ENCODE measurements at regions of chr17 and their contacts with region 1.

Region 1: GRCh38 chr17:35540589-35541404 is 3.3 kb upstream of the SLFN12L start:
- DNase-seq: peak; percentile 66
- ATAC-seq: peak; percentile 29
- H3K4me3 Mint-ChIP-seq: peak overlapping the region; percentile 82
- H3K27ac Mint-ChIP-seq: peak overlapping the region; percentile 95
- H3K4me1 Mint-ChIP-seq: peaks cover 60% of the 10 kb centered on the region
- H3K27me3 Mint-ChIP-seq: no peaks in the 10 kb centered on the region

Region 2: GRCh38 chr17:35214631-35215273 is 326.0 kb before region 1 on chr17:
- CTCF ChIA-PET with region 1: interaction called, 19 read pairs
- POLR2A ChIA-PET with region 1: interaction called, 67 read pairs
- DNase-seq: peak; percentile 51
- ATAC-seq: peak; percentile 43
- H3K4me3 Mint-ChIP-seq: peak overlapping the region; percentile 69
- H3K27ac Mint-ChIP-seq: peak overlapping the region; percentile 96
- H3K4me1 Mint-ChIP-seq: peaks cover 86% of the 10 kb centered on the region
- H3K27me3 Mint-ChIP-seq: no peaks in the 10 kb centered on the region

Region 3: DNA sequence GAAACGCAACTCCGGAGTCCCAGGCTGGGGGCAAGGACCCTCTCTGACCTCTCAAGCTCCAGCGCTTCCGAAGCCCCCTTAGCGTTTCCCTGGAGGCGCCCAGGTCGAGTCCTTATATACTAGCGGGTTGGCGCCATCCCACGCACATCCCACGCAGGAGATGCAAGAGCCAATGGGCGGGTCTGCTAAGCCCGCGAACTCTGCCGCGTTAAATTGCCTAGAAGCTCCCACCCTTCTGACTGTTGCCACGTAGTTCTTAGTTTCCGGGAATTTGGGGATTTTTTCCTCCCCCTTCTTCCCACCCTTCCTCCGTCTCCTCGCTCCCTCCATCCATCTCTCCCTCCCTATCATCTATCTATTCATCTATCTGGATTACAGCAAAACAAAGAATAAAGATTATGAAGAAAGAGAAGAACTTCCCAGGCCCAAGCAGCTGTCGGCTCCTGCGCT is 167.2 kb before region 1 on chr17 and contains the start of gene SLFN11:
- CTCF ChIA-PET with region 1: interaction called, 23 read pairs
- POLR2A ChIA-PET with region 1: interaction called, 54 read pairs
- DNase-seq: peak; percentile 86
- ATAC-seq: peak; percentile 81
- H3K4me3 Mint-ChIP-seq: peak within 1 kb of the TSS; percentile 99
- H3K27ac Mint-ChIP-seq: peak within 1 kb of the TSS; percentile 98
- H3K4me1 Mint-ChIP-seq: peaks cover 57% of the 10 kb centered on the region
- H3K27me3 Mint-ChIP-seq: peaks cover 3% of the 10 kb centered on the region
- total RNA-seq, gene SLFN11: 40.0 to 50.1 TPM

Region 4: DNA sequence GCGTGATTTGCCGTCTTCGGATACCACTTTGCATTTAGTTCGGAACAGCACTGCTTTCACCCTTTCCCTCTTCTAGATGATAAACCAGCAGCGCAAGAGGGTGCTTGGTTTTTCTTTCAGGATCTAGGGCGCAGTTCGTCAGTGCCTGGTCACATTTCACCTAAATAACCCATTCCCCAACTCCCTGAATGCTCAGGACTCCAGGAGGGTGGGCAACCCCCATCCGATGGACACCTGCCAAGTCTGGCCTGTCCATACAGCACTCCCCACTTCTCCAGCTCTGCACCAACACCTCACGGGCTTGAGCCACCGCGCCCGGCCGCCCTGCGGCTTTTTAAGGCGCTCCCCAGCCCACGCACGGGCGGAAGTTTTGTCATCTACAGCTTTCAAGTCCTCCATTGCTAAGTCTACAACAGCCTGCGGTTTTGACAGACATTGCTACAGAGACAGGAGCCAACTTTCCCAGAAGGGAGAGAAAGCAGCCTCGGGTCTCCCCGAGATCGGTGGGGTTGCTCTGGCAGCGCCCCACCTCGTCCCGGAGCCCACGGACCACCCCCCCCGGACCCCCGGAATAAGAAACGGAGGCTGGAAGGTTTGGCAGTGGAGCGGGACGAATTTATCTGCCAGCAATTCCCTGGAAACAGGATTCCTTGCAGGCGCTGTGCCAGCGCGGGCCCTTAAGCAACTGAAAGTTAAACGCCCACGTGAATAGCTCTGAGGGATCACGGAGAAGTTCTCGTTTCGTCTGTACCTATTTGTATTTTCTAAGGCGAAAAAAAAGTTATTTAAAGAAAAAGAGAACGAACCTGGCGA is 53.7 kb before region 1 on chr17:
- CTCF ChIA-PET with region 1: interaction called, 12 read pairs
- POLR2A ChIA-PET with region 1: interaction called, 10 read pairs
- DNase-seq: peak; percentile 76
- ATAC-seq: peak; percentile 69
- H3K4me3 Mint-ChIP-seq: peak overlapping the region; percentile 76
- H3K27ac Mint-ChIP-seq: peak overlapping the region; percentile 90
- H3K4me1 Mint-ChIP-seq: peaks cover 71% of the 10 kb centered on the region
- H3K27me3 Mint-ChIP-seq: no peaks in the 10 kb centered on the region

Region 5: DNA sequence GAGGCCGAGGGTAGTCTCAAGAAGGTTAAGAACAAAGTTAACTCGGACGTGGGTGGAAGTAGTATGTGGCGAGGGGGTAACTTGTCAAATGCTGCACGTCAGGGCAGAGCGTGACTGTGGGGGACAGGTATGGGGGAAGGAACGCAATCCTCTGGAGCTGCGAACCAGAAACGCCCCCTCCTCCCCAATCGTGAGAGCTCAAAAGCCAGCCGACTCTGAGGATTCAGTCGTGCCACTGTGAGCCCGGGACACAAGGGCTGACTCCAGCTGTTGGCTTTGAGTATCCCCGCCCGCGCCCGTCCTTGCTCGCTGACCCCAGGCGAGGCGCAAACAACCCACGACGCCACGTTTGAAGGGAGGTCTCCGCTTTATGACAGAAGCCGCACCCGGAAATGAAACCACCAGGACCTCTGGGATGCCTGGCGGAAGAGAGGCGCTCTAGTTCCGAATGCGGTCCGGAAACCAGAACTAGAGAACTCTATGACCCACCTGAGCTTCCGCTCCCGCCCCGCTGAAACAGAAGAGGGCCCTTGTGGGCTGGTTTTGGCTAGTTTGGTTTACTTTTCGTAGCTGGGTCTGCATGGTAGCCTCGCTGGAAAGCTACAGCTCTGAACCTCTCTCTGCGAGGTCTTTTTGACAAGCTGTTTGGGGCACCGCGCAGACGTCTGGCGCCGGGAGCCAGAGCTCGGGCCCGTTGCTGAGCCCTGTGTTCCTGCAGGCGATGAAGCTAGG is 37.6 kb after region 1 on chr17 and contains the start of gene PEX12:
- CTCF ChIA-PET with region 1: interaction called, 13 read pairs
- POLR2A ChIA-PET with region 1: interaction called, 45 read pairs
- DNase-seq: peak; percentile 94
- ATAC-seq: peak; percentile 96
- H3K4me3 Mint-ChIP-seq: peak within 1 kb of the TSS; percentile 93
- H3K27ac Mint-ChIP-seq: peak within 1 kb of the TSS; percentile 96
- H3K4me1 Mint-ChIP-seq: peaks cover 28% of the 10 kb centered on the region
- H3K27me3 Mint-ChIP-seq: peaks cover under 1% of the 10 kb centered on the region
- total RNA-seq, gene PEX12: 4.0 to 4.1 TPM

Region 6: GRCh38 chr17:35747540-35748017 is 206.8 kb after region 1 on chr17:
- CTCF ChIA-PET with region 1: interaction called, 20 read pairs
- POLR2A ChIA-PET with region 1: no interaction called
- DNase-seq: peak; percentile 87
- ATAC-seq: peak; percentile 87
- H3K4me3 Mint-ChIP-seq: no peak overlapping the region
- H3K27ac Mint-ChIP-seq: no peak overlapping the region
- H3K4me1 Mint-ChIP-seq: peaks cover 9% of the 10 kb centered on the region
- H3K27me3 Mint-ChIP-seq: peaks cover 31% of the 10 kb centered on the region